Activated CD4-positive, alpha-beta T cell treated with anti-CD3 and anti-CD28 coated beads, Interleukin-2, amount 10 ng/mL, durations not matched to agents 24 days and 14 days (primary cell): ENCODE measurements at regions of chr3 and their contacts with region 1.

Region 1: GRCh38 chr3:16511681-16512434 is 1.6 kb downstream of the RFTN1 start:
- DNase-seq: peak; percentile 93
- H3K4me3 Mint-ChIP-seq: peak overlapping the region; percentile 95
- H3K27ac Mint-ChIP-seq: peak overlapping the region; percentile 85
- H3K4me1 Mint-ChIP-seq: peaks cover 64% of the 10 kb centered on the region
- H3K27me3 Mint-ChIP-seq: no peaks in the 10 kb centered on the region

Region 2: GRCh38 chr3:16290007-16290826 is 221.6 kb before region 1 on chr3:
- intact Hi-C with region 1: loop called (anchors 1 kb)
- DNase-seq: peak; percentile 89
- H3K4me3 Mint-ChIP-seq: peak overlapping the region; percentile 93
- H3K27ac Mint-ChIP-seq: peak overlapping the region; percentile 92
- H3K4me1 Mint-ChIP-seq: peaks cover 66% of the 10 kb centered on the region
- H3K27me3 Mint-ChIP-seq: no peaks in the 10 kb centered on the region

Region 3: DNA sequence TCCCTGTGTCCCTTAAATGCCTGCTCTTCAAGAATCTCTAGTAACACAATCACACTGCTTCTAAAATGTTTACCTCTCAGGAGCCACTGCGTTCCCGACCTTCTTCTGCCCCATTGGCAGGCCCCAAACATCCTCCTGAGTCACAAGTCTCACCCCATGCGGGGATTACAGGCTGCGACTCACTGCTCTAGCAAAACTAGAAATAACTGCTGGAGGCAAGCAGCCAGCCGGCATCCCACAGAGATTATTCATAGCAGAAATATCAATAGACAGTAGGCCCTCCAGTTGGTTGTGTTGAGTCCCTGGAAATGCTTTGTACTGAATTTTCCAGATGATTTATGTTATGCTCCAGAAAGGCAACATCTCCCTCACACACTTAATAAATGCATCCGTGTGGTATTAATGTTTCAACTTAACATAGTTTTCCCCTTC is 63.2 kb before region 1 on chr3:
- intact Hi-C with region 1: loop called (anchors 2 kb)
- DNase-seq: no peak
- H3K4me3 Mint-ChIP-seq: no peak overlapping the region
- H3K27ac Mint-ChIP-seq: peak overlapping the region; percentile 60
- H3K4me1 Mint-ChIP-seq: peaks cover 46% of the 10 kb centered on the region
- H3K27me3 Mint-ChIP-seq: no peaks in the 10 kb centered on the region

Region 4: DNA sequence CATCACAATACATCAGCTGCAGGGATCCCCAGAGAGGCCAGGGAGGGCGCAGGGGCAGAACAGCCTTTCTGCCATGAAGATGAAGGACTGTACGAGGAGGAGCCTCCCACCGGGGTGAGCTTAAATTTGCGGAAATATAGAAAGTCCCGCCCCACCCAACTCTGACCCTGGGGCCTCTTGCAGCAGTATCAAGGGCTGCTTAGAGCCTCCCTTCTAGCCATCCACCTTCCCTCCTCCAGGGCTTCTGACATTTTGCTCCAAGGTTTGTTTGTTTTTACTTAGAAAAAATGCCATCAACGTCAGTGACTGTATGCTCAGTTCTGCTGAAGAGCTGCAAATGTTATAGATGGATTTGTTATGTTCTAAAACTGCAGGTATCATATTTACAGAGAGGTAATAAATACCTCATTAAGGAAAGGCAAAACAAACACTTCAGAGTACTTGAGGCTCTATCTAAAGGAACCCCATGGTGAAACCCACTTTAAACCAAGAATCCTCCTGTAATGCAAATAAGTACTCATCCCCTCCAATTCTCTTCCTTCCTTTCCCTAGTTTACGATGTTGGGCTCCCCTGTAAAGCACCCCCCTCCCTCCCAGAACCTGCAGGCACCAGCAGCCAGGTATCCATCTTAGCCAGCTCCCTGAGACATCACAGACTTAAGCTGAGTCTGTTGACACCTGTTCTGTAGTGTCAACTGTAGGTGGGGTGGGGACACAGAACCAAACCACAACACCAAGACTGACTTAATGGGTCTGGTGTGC is 28.9 kb before region 1 on chr3:
- intact Hi-C with region 1: loop called (anchors 2 kb)
- DNase-seq: peak; percentile 81
- H3K4me3 Mint-ChIP-seq: peak overlapping the region; percentile 69
- H3K27ac Mint-ChIP-seq: peak overlapping the region; percentile 69
- H3K4me1 Mint-ChIP-seq: peaks cover 72% of the 10 kb centered on the region
- H3K27me3 Mint-ChIP-seq: no peaks in the 10 kb centered on the region

Region 5: DNA sequence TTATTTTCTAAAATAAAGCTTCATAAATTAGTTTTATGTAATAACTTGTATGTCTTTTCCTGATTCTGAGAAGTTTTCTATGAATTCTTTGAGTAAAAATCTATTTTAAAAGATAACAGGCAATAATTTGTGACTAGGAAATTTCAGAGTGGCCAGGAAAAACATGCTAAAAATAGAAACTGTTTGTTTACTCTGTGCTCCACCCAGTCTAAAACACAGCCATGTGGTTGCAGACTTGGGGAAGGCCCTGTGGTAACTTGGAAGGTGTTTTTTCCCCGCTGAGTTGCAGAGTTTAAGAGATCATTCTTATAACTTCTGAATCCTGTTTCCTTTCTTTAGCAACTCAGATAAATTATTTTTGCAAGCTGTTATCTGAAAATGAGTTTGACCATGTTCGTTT is 394.8 kb after region 1 on chr3:
- intact Hi-C with region 1: loop called (anchors 5 kb)
- DNase-seq: peak; percentile 75
- H3K4me3 Mint-ChIP-seq: peak overlapping the region; percentile 38
- H3K27ac Mint-ChIP-seq: no peak overlapping the region
- H3K4me1 Mint-ChIP-seq: peaks cover 61% of the 10 kb centered on the region
- H3K27me3 Mint-ChIP-seq: no peaks in the 10 kb centered on the region

Region 6: DNA sequence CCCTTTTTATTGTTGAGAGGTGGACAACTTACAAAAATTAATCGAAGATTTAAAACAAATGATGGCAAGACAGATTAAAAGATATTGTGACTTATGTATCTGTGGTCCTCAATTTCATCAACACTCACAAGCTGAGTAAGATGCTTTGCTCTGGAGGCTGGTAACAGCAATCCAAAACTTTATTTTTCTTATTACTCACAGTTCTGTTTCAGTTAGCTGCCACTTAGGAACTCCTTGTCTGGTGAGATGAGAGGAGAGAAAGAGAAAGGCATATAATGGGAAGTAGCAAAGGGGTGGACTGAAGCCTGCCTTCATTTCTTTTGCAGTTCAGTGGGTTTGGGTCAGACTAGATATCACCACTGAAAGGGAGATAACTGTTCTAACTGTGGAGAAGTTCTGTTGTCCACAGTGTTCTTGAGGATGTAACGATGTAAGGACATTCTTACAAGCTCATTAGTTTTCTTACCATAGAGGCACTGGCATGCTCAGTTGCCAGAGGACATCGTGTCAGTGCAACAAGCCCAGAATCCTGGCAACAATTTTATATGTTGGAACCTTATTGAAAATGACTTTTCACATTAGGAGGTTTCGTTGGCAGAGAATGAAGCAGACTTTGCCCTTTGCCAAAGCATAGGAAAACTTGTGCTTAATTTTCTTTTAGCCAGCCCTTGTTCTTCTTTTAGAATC is 466.5 kb after region 1 on chr3:
- intact Hi-C with region 1: no loop called
- DNase-seq: no peak
- H3K4me3 Mint-ChIP-seq: no peak overlapping the region
- H3K27ac Mint-ChIP-seq: no peak overlapping the region
- H3K4me1 Mint-ChIP-seq: peaks cover 7% of the 10 kb centered on the region
- H3K27me3 Mint-ChIP-seq: no peaks in the 10 kb centered on the region

Region 7: DNA sequence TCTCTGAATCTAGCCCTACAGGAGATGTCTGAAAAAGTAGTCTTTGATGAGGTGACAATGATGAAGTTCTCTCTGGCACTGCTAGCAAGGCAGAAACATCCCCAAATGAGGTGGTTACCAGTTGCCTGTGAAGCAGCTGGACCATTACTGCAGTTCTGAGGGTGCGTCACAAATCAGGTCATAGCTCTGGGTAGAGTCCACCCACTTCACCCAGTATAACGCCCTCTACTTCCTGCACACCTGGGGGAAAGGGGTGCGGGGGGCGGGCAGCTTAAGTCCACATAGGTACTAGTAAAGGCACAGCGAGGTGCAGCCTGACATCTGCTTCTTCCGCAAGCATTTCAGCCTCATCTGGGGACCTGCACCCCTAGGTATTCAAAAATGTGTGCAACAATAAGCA is 1926.7 kb after region 1 on chr3:
- intact Hi-C with region 1: loop called (anchors 10 kb)
- DNase-seq: peak; percentile 91
- H3K4me3 Mint-ChIP-seq: peak overlapping the region; percentile 88
- H3K27ac Mint-ChIP-seq: peak overlapping the region; percentile 88
- H3K4me1 Mint-ChIP-seq: peaks cover 27% of the 10 kb centered on the region
- H3K27me3 Mint-ChIP-seq: no peaks in the 10 kb centered on the region